Natural killer cell (primary cell): ENCODE measurements at regions of chr18 and their contacts with region 1.

Region 1: DNA sequence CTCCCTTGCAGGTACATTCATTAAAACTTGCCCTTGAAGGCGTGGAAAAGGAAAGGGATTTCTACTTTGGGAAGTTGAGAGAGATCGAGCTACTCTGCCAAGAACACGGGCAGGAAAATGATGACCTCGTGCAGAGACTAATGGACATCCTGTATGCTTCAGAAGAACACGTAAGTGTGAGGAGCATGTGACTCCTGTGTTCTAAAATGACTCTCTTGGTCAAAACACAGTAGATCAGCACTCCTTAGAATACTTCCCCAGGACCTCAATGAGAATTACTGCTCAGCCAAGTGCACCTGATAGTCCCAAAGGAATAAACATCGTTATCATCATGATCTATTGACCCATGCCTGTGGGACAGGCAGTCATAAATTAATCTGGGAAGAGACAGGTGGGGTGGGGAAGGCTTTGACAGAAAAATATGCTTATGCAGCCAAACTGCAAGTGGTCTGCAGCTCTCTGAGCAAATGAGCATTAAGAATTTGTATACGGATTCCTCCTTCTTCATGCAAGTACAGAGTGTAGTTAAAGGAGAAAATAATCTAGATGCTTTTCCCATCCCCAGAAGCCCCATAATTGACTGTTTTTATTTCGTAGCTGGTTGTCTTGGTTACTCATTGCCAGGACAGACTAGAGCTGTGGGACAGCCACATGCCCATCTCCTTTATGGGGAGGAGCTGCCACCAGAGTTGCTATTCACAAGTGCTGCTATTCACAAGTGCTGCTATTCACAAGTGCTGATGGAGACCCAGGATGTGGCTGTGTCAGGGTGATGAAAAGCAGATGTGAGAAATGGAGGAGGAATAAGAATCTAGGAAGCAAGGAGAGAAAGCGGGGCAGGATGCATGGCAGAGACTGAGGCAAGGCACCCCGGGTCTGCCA is 91.0 kb downstream of the MAPRE2 start:
- DNase-seq: peak in 1 of 2 donors; percentile 56
- ATAC-seq: peak; percentile 82 to 93 (median 91)
- H3K4me3 ChIP-seq: no peak overlapping the region
- H3K4me3 Mint-ChIP-seq: peak overlapping the region; percentile 4
- H3K27ac ChIP-seq: peak overlapping the region; percentile 85
- H3K27ac Mint-ChIP-seq: peak overlapping the region; percentile 80 to 97
- H3K4me1 ChIP-seq: peaks cover 23% of the 10 kb centered on the region
- H3K4me1 Mint-ChIP-seq: peaks cover 70 to 77% of the 10 kb centered on the region in 2 donors
- H3K27me3 ChIP-seq: no peaks in the 10 kb centered on the region
- H3K27me3 Mint-ChIP-seq: no peaks in the 10 kb centered on the region
- CTCF ChIP-seq: no peak

Region 2: GRCh38 chr18:35071819-35072247 is 60.4 kb before region 1 on chr18:
- intact Hi-C with region 1: no loop called
- DNase-seq: no peak
- ATAC-seq: peak; percentile 34 to 57 (median 52)
- H3K4me3 ChIP-seq: no peak overlapping the region
- H3K4me3 Mint-ChIP-seq: peak overlapping the region; percentile 11
- H3K27ac ChIP-seq: peak overlapping the region; percentile 23
- H3K27ac Mint-ChIP-seq: peak overlapping the region; percentile 86 to 87
- H3K4me1 ChIP-seq: no peaks in the 10 kb centered on the region
- H3K4me1 Mint-ChIP-seq: peaks cover 78 to 90% of the 10 kb centered on the region in 2 donors
- H3K27me3 ChIP-seq: no peaks in the 10 kb centered on the region
- H3K27me3 Mint-ChIP-seq: no peaks in the 10 kb centered on the region
- CTCF ChIP-seq: no peak

Region 3: GRCh38 chr18:35106845-35107148 is 25.5 kb before region 1 on chr18:
- intact Hi-C with region 1: loop called (anchors 2 kb)
- DNase-seq: peak in 1 of 2 donors; percentile 57
- ATAC-seq: peak; percentile 76 to 88 (median 84)
- H3K4me3 ChIP-seq: no peak overlapping the region
- H3K4me3 Mint-ChIP-seq: peak overlapping the region; percentile 28
- H3K27ac ChIP-seq: peak overlapping the region; percentile 73
- H3K27ac Mint-ChIP-seq: no peak overlapping the region
- H3K4me1 ChIP-seq: no peaks in the 10 kb centered on the region
- H3K4me1 Mint-ChIP-seq: peaks cover 51 to 73% of the 10 kb centered on the region in 2 donors
- H3K27me3 ChIP-seq: no peaks in the 10 kb centered on the region
- H3K27me3 Mint-ChIP-seq: no peaks in the 10 kb centered on the region
- CTCF ChIP-seq: no peak

Region 4: GRCh38 chr18:35158728-35159450 is 26.6 kb after region 1 on chr18:
- intact Hi-C with region 1: loop called (anchors 2 kb)
- DNase-seq: peak; percentile 30 to 36
- ATAC-seq: peak; percentile 84 to 88 (median 85)
- H3K4me3 ChIP-seq: no peak overlapping the region
- H3K4me3 Mint-ChIP-seq: peak overlapping the region; percentile 62
- H3K27ac ChIP-seq: peak overlapping the region; percentile 86
- H3K27ac Mint-ChIP-seq: peak overlapping the region; percentile 92
- H3K4me1 ChIP-seq: peaks cover 50% of the 10 kb centered on the region
- H3K4me1 Mint-ChIP-seq: peaks cover 71 to 72% of the 10 kb centered on the region in 2 donors
- H3K27me3 ChIP-seq: no peaks in the 10 kb centered on the region
- H3K27me3 Mint-ChIP-seq: no peaks in the 10 kb centered on the region
- CTCF ChIP-seq: no peak